ENCODE measurements at regions of chr1 and their contacts with region 1.

Region 1: GRCh38 chr1:39196244-39197215 is 8.0 kb upstream of the MACF1 start:
- DNase-seq: peak; percentile 72
- ATAC-seq: peak; percentile 44
- H3K4me3 ChIP-seq: peak overlapping the region; percentile 40; the same call in 1 of the 2 replicates
- H3K27ac ChIP-seq: peak overlapping the region; percentile 65
- H3K4me1 ChIP-seq: peaks cover 50% of the 10 kb centered on the region
- H3K27me3 ChIP-seq: no peaks in the 10 kb centered on the region
- CTCF ChIP-seq: no peak

Region 2: DNA sequence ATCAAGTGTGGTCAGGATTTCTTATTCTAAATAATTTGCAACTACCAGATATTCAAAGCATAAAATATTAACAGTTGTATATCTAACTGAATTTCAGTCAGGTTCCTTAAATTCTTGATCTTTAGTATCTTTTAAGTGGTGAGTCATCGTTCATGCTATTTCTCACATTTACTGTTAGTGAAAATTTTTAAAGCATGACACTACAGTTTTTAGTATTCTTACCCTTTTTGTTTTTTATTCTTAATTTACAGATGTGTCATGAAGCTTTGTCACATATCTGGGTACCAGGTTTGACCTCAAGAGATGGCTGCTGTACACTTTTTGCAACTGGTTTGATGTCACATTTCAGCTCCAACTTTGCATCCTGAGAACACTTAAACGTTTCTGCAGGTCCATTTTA is 192.7 kb before region 1 on chr1:
- CTCF ChIA-PET with region 1: no interaction called
- POLR2A ChIA-PET with region 1: no interaction called
- intact Hi-C with region 1: no loop called
- DNase-seq: no peak
- ATAC-seq: no peak
- H3K4me3 ChIP-seq: no peak overlapping the region
- H3K27ac ChIP-seq: no peak overlapping the region
- H3K4me1 ChIP-seq: no peaks in the 10 kb centered on the region
- H3K27me3 ChIP-seq: no peaks in the 10 kb centered on the region
- CTCF ChIP-seq: no peak

Region 3: GRCh38 chr1:39132505-39133339 is 63.8 kb before region 1 on chr1:
- CTCF ChIA-PET with region 1: interaction called, 23 read pairs
- POLR2A ChIA-PET with region 1: interaction called, 6 read pairs
- intact Hi-C with region 1: loop called (anchors 1 kb)
- DNase-seq: peak; percentile 94
- ATAC-seq: peak; percentile 68
- H3K4me3 ChIP-seq: peak overlapping the region; percentile 25
- H3K27ac ChIP-seq: peak overlapping the region; percentile 91
- H3K4me1 ChIP-seq: peaks cover 62% of the 10 kb centered on the region
- H3K27me3 ChIP-seq: no peaks in the 10 kb centered on the region
- CTCF ChIP-seq: peak; percentile 81

Region 4: GRCh38 chr1:39167632-39168209 is 28.8 kb before region 1 on chr1:
- CTCF ChIA-PET with region 1: interaction called, 10 read pairs
- POLR2A ChIA-PET with region 1: no interaction called
- intact Hi-C with region 1: no loop called
- DNase-seq: no peak
- ATAC-seq: no peak
- H3K4me3 ChIP-seq: no peak overlapping the region
- H3K27ac ChIP-seq: no peak overlapping the region
- H3K4me1 ChIP-seq: no peaks in the 10 kb centered on the region
- H3K27me3 ChIP-seq: no peaks in the 10 kb centered on the region
- CTCF ChIP-seq: no peak

Region 5: GRCh38 chr1:39183503-39184353 is 12.8 kb before region 1 on chr1:
- CTCF ChIA-PET with region 1: interaction called, 16 read pairs
- POLR2A ChIA-PET with region 1: no interaction called
- intact Hi-C with region 1: loop called (anchors 2 kb)
- DNase-seq: peak; percentile 98
- ATAC-seq: peak; percentile 77
- H3K4me3 ChIP-seq: no peak overlapping the region
- H3K27ac ChIP-seq: peak overlapping the region; percentile 82
- H3K4me1 ChIP-seq: peaks cover 68% of the 10 kb centered on the region
- H3K27me3 ChIP-seq: no peaks in the 10 kb centered on the region
- CTCF ChIP-seq: peak; percentile 65

Region 6: GRCh38 chr1:39398278-39399021 is 201.9 kb after region 1 on chr1:
- CTCF ChIA-PET with region 1: no interaction called
- POLR2A ChIA-PET with region 1: no interaction called
- intact Hi-C with region 1: loop called (anchors 10 kb)
- DNase-seq: peak; percentile 96
- ATAC-seq: peak; percentile 93
- H3K4me3 ChIP-seq: peak overlapping the region; percentile 5; the same call in 1 of the 2 replicates
- H3K27ac ChIP-seq: peak overlapping the region; percentile 75
- H3K4me1 ChIP-seq: peaks cover 53% of the 10 kb centered on the region
- H3K27me3 ChIP-seq: no peaks in the 10 kb centered on the region
- CTCF ChIP-seq: no peak